Thyroid gland (tissue), 4 donors: ENCODE measurements at regions of chr14 and their contacts with region 1.

Region 1: DNA sequence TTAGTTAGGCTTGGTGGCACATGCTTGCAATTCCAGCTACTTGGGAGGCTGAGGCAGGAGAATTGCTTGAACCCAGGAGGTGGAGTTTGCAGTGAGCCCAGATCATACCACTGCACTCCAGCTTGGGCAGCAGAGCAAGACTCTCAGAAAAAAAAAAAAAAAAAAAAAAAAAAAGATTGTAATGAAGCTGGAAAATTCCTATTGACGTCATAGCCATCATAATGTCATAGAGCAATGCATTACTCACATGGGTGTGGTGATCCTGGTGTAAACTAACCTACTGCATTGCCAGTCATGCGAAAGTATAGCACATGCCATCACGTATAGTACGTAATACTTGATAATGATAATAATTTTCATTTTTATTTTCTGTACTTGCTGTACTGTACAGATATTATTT is 42.7 kb upstream of the NID2 start:
- DNase-seq: no peak
- H3K4me3 ChIP-seq: no peak overlapping the region
- H3K27ac ChIP-seq: peak overlapping the region in 2 of 3 donors; percentile 73 to 76
- H3K4me1 ChIP-seq: peaks cover 27 to 34% of the 10 kb centered on the region in 2 donors
- H3K27me3 ChIP-seq: no peaks in the 10 kb centered on the region
- CTCF ChIP-seq: no peak
- POLR2A ChIP-seq: no peak

Region 2: GRCh38 chr14:52043690-52044089 is 67.9 kb before region 1 on chr14:
- intact Hi-C with region 1: no loop called
- DNase-seq: peak; percentile 56 to 57
- H3K4me3 ChIP-seq: no peak overlapping the region
- H3K27ac ChIP-seq: peak overlapping the region in 2 of 3 donors; percentile 10 to 63
- H3K4me1 ChIP-seq: peaks cover 42 to 60% of the 10 kb centered on the region in 2 donors
- H3K27me3 ChIP-seq: no peaks in the 10 kb centered on the region
- CTCF ChIP-seq: peak; percentile 16 to 56 (median 46)
- POLR2A ChIP-seq: no peak

Region 3: DNA sequence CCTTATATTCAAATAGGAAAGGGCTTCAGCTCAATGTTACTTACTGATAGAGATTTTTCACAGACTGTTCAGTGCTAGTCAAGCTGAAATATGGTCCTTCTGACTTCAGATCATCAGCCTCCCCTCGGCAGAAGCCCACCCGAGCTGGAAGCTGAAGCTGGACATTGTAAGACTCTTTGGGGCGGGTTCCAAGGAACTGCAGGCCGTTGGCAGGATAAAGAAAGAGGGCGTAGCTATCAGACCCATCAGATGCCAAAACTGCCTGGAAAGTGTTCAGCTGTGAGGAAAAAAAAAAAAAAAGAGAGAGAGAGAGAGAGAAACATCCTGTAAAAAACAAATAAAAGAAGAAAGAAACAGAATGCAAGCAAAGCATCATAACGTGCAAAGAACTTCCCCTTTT is 51.5 kb before region 1 on chr14:
- intact Hi-C with region 1: no loop called
- DNase-seq: peak; percentile 53 to 59
- H3K4me3 ChIP-seq: no peak overlapping the region
- H3K27ac ChIP-seq: peak overlapping the region; percentile 59 to 72 (median 61)
- H3K4me1 ChIP-seq: peaks cover 49 to 64% of the 10 kb centered on the region in 2 donors
- H3K27me3 ChIP-seq: no peaks in the 10 kb centered on the region
- CTCF ChIP-seq: no peak
- POLR2A ChIP-seq: no peak

Region 4: DNA sequence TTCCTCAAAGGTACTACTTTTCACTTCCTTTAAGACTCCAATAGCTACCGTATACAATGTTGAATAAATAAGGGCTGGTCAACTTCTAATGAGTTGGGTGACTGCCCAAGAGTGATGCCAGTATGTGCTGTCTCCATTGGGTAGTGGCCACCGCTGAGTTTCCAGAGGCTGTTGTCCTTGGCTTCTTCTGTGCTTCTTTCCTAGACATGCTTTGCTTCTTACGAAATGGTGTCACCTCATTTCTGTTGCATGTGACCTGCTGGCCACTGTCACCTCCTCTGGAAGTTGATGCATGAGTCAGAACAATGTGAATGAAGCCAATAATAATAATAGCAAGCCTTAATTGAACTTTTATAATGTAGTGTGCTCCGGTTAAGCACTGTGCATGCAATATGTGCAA is 35.2 kb before region 1 on chr14:
- intact Hi-C with region 1: loop called (anchors 5 kb)
- DNase-seq: peak in 1 of 2 donors; percentile 14
- H3K4me3 ChIP-seq: no peak overlapping the region
- H3K27ac ChIP-seq: peak overlapping the region in 2 of 3 donors; percentile 81 to 96
- H3K4me1 ChIP-seq: peaks cover 67 to 74% of the 10 kb centered on the region in 2 donors
- H3K27me3 ChIP-seq: no peaks in the 10 kb centered on the region
- CTCF ChIP-seq: no peak
- POLR2A ChIP-seq: no peak

Region 5: DNA sequence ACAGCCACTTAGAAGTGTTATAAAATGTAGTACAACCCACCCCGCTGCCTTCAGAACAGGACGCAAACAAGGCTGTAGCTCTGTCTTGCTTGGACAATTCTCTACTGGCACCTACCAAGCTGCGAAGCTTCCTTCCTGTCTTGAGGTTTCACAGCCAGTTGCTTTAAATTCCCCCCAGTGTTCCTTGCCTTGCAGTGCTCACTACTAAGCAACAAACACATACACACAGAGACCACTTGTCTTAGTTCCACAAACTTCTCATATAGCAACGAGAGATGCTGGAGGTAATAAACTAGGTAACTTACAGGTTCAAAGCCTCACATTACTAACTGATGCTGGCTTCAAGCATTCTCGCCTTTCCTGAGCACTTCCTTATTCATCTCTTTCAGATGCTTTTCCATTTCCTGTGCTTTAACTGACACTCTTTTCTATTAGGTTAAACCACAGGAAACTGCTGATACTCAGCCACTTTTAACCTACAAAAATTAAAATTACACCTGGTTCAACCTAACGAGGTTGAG is 64.5 kb after region 1 on chr14:
- intact Hi-C with region 1: no loop called
- DNase-seq: no peak
- H3K4me3 ChIP-seq: no peak overlapping the region
- H3K27ac ChIP-seq: no peak overlapping the region
- H3K4me1 ChIP-seq: no peaks in the 10 kb centered on the region
- H3K27me3 ChIP-seq: no peaks in the 10 kb centered on the region
- CTCF ChIP-seq: no peak
- POLR2A ChIP-seq: no peak

Region 6: GRCh38 chr14:52355016-52355431 is 243.5 kb after region 1 on chr14:
- intact Hi-C with region 1: no loop called
- DNase-seq: no peak
- H3K4me3 ChIP-seq: no peak overlapping the region
- H3K27ac ChIP-seq: peak overlapping the region in 2 of 3 donors; percentile 4 to 23
- H3K4me1 ChIP-seq: no peaks in the 10 kb centered on the region
- H3K27me3 ChIP-seq: no peaks in the 10 kb centered on the region
- CTCF ChIP-seq: no peak
- POLR2A ChIP-seq: no peak